ENCODE measurements at regions of chr21 and their contacts with region 1.

Region 1: DNA sequence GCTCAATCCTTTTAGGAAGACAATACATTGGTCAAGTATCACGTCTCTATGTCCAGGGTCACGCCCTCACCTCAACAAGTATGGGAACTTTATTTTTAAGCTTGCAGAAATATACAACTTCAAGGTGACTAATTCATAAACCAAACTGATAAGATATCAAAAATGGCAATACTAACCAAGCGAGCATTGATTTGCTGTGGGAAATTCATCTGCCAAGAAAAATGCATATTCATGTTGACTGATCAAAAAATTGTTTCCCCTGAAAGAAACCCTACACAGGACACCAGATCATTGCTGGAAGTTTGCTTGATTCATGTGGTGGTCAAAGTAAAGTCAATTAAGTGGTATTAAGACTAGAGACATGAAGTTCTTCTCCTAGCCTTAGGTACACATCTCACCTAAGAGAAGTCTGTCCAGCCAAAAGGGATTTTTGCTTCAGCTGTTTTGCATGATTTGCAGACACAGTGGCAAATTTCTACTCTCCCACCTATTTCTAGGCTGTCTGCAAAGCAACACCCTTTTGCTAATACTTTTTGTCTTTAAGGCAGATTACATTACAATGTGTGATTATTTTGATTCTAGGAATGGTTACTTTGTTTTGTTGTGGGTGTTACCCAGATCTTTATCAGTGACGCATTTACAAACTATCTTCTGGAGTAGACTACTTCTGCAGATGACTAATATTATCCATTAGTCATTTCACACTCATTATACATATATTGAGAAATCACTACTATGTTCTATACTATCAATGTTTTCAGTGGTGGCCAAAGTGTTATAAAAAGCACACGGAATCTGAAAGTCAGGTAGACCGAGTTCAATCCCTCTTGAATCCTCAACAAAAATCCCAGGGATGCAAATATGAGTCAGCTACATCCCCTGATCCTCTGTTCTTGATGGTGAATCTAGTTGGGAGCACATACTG is 12.3 kb downstream of the SAMSN1 start:
- DNase-seq: peak; percentile 29
- H3K4me3 Mint-ChIP-seq: peak overlapping the region; percentile 95
- H3K27ac Mint-ChIP-seq: peak overlapping the region; percentile 100
- H3K4me1 Mint-ChIP-seq: peaks cover 82% of the 10 kb centered on the region
- H3K27me3 Mint-ChIP-seq: peaks cover 2% of the 10 kb centered on the region

Region 2: DNA sequence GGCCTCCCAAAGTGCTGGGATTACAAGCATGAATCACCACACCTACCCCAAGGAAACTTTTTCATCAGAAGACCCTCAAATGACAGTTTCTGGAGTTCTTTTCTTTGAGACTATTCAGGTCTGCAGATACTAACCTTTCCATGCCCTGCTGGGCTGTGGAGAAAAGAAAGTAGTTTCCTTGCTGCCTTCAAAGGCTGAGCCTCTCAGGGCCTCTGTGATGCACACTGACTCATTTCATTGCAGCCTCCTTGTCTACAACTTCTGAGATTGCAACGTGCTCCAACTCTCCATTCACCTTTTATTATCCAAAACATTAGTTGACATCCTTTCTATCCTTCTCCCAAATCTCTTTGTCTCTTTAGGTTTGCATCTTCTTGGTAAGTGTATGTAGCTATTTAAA is 21.2 kb after region 1 on chr21:
- CTCF ChIA-PET with region 1: no interaction called
- POLR2A ChIA-PET with region 1: no interaction called
- intact Hi-C with region 1: no loop called
- DNase-seq: peak; percentile 59
- H3K4me3 Mint-ChIP-seq: no peak overlapping the region
- H3K27ac Mint-ChIP-seq: peak overlapping the region; percentile 16
- H3K4me1 Mint-ChIP-seq: peaks cover 35% of the 10 kb centered on the region
- H3K27me3 Mint-ChIP-seq: no peaks in the 10 kb centered on the region

Region 3: DNA sequence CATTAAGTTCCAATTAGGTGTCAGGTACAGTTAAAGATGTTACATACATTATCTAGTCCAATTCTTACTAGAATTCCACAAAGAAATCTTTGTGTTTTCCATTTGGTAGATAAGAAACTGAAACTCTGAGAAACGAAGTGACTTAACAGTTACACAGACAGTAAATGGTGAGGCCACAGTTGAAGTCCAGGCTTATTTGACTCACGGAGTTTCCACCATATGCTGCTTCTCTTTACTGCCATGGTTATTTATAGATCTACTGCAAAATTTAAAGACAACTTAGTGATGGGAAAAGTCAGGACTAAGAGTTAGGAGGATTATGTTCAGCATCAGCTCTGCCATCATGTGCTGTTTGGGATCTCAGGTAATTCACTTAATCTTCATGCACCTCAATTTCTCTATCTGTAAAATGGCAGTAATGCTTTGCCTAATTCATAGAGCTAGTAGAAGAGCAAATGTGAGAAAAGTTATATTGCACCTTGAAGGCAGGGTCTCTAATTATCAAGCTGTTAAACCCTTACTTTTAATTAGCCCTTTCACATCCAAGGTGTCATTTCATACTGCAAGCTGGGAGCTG is 38.5 kb after region 1 on chr21:
- CTCF ChIA-PET with region 1: no interaction called
- POLR2A ChIA-PET with region 1: no interaction called
- intact Hi-C with region 1: loop called (anchors 2 kb)
- DNase-seq: no peak
- H3K4me3 Mint-ChIP-seq: no peak overlapping the region
- H3K27ac Mint-ChIP-seq: peak overlapping the region; percentile 5
- H3K4me1 Mint-ChIP-seq: peaks cover 14% of the 10 kb centered on the region
- H3K27me3 Mint-ChIP-seq: no peaks in the 10 kb centered on the region

Region 4: DNA sequence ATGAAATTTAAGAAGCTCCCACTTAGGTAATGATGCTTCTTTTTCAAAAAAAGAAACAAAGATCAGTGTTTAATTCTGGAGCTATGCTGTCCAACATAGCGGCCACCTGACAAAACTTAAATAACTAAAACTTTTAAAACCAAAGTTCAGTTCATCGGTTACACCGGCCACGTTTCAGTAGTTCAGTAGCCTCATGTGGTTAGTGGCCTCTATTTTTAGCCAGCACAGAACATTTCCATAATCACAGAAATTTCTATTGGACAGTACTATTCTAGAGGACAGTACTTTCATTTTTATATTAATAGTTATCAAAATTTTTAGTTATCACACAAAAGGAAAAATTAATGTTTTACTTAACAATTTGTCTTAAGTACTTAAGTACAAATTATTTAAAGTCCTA is 1337.1 kb after region 1 on chr21:
- CTCF ChIA-PET with region 1: no interaction called
- POLR2A ChIA-PET with region 1: no interaction called
- intact Hi-C with region 1: no loop called
- DNase-seq: no peak
- H3K4me3 Mint-ChIP-seq: no peak overlapping the region
- H3K27ac Mint-ChIP-seq: no peak overlapping the region
- H3K4me1 Mint-ChIP-seq: no peaks in the 10 kb centered on the region
- H3K27me3 Mint-ChIP-seq: no peaks in the 10 kb centered on the region

Measured in activated CD4-positive, alpha-beta memory T cell treated with anti-CD3 and anti-CD28 coated beads for 36 hours (primary cell).